ENCODE measurements at regions of chr17 and their contacts with region 1.

Region 1: DNA sequence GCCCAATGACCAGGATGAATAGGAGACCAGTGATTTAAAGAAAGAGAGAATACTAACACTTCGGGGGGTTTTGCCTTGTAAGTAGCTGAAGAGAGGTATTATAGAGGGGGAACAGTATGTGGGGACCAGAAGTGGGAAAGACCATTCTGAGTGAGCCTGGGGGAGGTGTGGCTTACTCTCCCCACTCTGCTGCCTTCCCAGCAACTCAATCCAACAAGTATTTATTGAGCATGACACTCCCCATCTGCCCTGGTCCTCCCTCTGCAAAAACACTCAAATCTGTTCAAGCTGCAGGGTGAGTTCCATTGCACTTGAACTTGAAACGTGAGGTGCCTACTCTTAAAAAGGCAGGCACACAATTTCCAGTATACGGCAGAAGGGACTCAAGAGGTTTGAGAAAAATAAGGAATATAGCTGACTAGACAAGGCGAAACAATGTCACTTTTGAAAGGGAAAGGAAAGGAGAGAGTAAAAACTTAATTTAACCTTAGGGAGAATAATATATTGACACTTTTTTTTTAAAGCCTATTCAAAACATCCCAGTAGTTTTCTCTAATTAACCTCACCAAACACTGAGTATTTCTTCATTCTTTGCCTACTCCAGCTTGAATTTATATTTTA is 8.2 kb downstream of the FAM117A start:
- DNase-seq: no peak

Region 2: GRCh38 chr17:47763913-47764582 is 1991.7 kb before region 1 on chr17:
- intact Hi-C with region 1: loop called in 1 of 2 experiments (anchors 5 kb)
- DNase-seq: no peak